ENCODE measurements at regions of chr12 and their contacts with region 1.

Region 1: DNA sequence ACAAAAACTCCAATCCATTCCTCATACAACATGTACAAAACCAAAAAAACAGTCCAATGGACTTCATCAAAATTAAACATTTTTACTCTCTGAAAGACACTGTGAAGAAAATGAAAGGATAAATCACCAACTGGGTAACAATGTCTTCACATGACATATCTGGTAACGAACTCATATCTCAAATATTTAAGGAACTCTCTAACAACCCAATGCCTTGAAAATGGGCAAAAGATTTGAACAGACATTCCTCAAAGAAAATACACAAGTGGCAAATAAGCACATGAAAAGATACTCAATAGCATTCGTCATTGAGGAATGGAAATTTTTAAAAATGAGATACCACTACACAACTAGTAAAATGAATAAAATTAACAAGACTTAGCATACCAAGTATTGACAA is 198.7 kb upstream of the RASSF8 start:
- DNase-seq: no peak
- ATAC-seq: no peak
- H3K4me3 ChIP-seq: no peak overlapping the region
- H3K27ac ChIP-seq: no peak overlapping the region
- H3K4me1 ChIP-seq: peaks cover 13% of the 10 kb centered on the region
- H3K27me3 ChIP-seq: no peaks in the 10 kb centered on the region
- CTCF ChIP-seq: no peak
- EP300 ChIP-seq: no peak
- POLR2A ChIP-seq: no peak
- RAD21 ChIP-seq: no peak

Region 2: DNA sequence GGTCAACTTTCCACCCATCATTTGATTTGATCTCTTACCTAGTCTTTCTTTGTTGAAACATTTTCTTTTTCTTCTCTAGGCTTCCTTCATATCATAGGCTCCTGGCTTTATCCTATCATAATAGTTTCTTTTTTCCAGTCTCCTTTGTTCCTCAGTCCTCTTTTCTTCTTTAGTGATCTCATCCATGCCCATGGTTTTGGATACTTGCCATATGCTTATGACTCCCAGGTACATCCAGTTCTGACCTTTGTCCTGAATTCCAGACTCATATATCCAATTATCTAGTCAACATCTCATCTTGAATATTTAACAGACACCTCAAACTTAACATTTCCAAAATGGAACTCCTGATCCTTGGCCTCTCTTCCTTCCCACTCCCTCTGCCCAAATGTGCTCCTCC is 472.9 kb before region 1 on chr12:
- CTCF ChIA-PET with region 1: no interaction called
- POLR2A ChIA-PET with region 1: no interaction called
- in situ Hi-C with region 1: no loop called
- intact Hi-C with region 1: no loop called
- DNase-seq: no peak
- ATAC-seq: no peak
- H3K4me3 ChIP-seq: no peak overlapping the region
- H3K27ac ChIP-seq: no peak overlapping the region
- H3K4me1 ChIP-seq: no peaks in the 10 kb centered on the region
- H3K27me3 ChIP-seq: no peaks in the 10 kb centered on the region
- CTCF ChIP-seq: no peak
- EP300 ChIP-seq: no peak
- POLR2A ChIP-seq: no peak
- RAD21 ChIP-seq: no peak

Region 3: GRCh38 chr12:25781232-25781631 is 21.5 kb after region 1 on chr12:
- CTCF ChIA-PET with region 1: no interaction called
- POLR2A ChIA-PET with region 1: no interaction called
- in situ Hi-C with region 1: no loop called
- intact Hi-C with region 1: loop called (anchors 2 kb)
- DNase-seq: no peak
- ATAC-seq: no peak
- H3K4me3 ChIP-seq: no peak overlapping the region
- H3K27ac ChIP-seq: no peak overlapping the region
- H3K4me1 ChIP-seq: peaks cover 9% of the 10 kb centered on the region
- H3K27me3 ChIP-seq: no peaks in the 10 kb centered on the region
- CTCF ChIP-seq: no peak
- EP300 ChIP-seq: no peak
- POLR2A ChIP-seq: no peak
- RAD21 ChIP-seq: no peak